GM13977 (cell line): ENCODE measurements at regions of chr3 and their contacts with region 1.

Region 1: GRCh38 chr3:177777699-177778098 is 580.4 kb upstream of the TBL1XR1 start:
- DNase-seq: peak; percentile 39
- CTCF ChIP-seq: peak; percentile 70

Region 2: DNA sequence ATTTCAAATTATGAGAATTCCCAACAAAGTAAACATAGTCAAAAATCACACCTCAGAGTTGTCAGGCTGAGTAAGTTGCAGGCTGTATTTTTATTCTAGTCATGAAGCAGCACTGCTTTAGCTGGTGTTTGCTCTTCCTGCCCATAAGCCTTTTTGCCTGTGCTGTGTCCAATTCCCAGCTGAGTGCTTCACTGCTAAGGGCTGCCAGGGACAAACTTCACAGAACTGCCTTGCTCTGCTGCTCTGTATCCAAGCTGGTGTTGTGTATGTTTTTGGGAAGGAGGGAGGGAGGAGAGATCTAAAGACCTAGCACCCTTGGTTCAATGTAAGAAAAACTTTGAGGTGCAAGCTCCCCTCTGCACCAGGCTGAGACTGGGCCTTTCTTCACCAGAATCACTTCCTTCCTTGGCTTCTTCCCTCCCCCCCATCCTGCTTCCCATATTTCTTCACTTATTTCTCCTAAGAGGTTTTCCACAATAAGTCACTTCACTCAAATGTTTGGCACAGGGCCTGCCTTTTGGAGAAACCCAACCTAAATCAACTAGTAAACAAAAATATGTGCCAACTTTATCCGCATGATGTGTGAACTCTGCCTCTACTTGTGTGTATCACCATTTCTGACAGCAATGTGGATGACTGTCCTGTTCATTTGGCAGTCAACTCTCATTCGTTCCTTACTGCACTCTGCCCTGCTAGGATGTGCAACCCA is 736.5 kb before region 1 on chr3:
- in situ Hi-C with region 1: loop called (anchors 25 kb)
- DNase-seq: no peak
- CTCF ChIP-seq: no peak